Activated CD4-positive, alpha-beta memory T cell treated with anti-CD3 and anti-CD28 coated beads for 36 hours (primary cell): ENCODE measurements at regions of chr5 and their contacts with region 1.

Region 1: DNA sequence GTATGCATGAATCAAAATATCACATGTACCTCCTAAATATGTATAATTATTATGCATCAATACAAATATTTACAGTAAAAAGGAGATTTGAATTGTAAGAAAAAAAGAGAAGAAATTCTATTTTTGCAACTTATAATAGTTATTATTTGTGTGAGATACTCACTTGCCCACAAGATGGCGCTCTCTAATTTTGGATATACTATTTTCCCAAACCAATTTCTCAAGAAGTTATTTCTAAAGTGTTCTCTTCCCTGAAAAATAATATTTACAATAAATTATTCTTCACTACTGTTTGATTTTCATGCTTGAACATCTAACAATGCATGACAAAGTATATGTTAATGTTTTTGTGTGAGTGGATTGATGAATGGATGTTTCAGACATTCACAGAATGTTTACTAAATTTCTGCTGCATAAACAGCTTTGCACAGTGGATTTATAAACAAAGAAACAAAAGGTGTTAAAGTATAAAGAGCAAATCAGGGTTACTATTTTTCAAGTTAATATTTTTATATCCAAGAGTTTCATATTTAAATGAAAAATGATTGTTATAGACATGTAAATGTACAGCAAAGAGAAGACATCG is 503.4 kb downstream of the PDE4D start:
- DNase-seq: no peak
- H3K4me3 Mint-ChIP-seq: no peak overlapping the region
- H3K27ac Mint-ChIP-seq: no peak overlapping the region
- H3K4me1 Mint-ChIP-seq: no peaks in the 10 kb centered on the region
- H3K27me3 Mint-ChIP-seq: peaks cover 6% of the 10 kb centered on the region

Region 2: DNA sequence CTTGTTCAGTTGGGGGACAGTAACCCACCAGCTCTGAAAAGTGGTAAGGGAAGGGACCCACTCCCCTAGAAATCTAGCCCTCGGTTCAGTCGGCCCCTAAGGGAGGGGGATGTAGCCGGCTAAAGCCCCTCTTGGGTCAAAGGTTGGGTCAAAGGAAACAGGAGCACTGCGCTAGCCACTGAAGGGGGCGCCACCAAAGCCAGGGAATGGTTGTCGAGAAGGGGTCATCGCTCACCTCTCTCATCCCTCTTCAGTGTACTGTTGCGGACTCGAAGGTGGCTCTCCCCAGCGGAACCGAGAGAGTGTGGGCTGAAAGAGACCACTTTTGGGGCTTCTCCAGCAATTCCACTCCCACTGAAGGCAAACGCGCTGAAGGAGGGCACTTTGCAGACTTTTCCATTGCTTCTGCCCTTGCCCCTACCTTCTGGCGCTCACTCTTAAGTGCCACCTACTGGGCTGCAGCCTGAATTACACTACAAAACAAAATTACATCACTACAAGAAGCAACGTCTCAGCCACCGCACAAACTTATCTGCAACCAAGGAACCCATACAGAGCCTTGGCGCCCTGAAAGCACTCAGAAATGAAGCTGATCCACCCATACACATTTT is 106.5 kb after region 1 on chr5:
- CTCF ChIA-PET with region 1: interaction called, 7 read pairs
- POLR2A ChIA-PET with region 1: no interaction called
- intact Hi-C with region 1: loop called (anchors 1 kb)
- DNase-seq: peak; percentile 17
- H3K4me3 Mint-ChIP-seq: no peak overlapping the region
- H3K27ac Mint-ChIP-seq: no peak overlapping the region
- H3K4me1 Mint-ChIP-seq: no peaks in the 10 kb centered on the region
- H3K27me3 Mint-ChIP-seq: peaks cover 11% of the 10 kb centered on the region